AG04449 (cell line): ENCODE measurements at regions of chr12 and their contacts with region 1.

Region 1: DNA sequence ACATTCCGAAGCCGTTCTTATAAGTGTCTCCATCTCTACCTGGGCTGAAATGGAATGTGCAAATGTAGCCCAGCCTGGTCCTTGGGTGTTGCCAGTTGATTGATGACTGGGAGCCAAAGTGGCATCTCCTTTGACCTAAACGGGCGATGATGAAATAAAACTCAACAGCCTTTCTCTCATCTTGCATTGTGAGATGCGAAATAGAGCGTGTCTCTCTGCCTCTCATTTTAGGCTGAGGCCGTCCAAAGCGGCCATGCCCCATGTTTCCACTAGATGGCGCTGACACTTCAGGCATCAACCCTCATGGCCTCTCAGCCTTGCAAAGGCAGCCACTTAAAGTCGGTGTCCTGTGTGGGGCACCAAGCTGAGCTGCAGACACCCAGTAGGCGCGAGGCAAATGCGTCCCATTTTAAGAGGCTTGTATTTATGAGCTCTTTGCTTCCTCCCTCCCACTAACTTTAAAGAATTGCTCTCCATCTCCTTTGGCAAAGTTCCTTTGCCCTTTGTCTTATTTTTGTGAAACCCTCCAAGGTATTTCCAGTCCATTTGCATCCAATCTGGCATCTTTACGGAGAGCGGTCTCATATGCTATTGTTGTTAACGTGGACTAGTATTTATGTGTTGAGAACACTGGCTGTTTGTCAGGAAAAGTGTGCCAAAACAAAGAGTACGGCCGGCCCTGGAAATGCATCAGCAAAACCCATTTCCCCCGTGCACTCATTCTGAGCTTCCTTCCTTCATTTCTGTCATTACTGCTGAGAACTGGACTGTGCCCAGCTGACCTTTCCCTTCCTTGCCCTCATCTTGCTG is 25.0 kb downstream of the GPRC5A start:
- DNase-seq: no peak
- H3K4me3 ChIP-seq: no peak overlapping the region
- CTCF ChIP-seq: peak; percentile 97

Region 2: DNA sequence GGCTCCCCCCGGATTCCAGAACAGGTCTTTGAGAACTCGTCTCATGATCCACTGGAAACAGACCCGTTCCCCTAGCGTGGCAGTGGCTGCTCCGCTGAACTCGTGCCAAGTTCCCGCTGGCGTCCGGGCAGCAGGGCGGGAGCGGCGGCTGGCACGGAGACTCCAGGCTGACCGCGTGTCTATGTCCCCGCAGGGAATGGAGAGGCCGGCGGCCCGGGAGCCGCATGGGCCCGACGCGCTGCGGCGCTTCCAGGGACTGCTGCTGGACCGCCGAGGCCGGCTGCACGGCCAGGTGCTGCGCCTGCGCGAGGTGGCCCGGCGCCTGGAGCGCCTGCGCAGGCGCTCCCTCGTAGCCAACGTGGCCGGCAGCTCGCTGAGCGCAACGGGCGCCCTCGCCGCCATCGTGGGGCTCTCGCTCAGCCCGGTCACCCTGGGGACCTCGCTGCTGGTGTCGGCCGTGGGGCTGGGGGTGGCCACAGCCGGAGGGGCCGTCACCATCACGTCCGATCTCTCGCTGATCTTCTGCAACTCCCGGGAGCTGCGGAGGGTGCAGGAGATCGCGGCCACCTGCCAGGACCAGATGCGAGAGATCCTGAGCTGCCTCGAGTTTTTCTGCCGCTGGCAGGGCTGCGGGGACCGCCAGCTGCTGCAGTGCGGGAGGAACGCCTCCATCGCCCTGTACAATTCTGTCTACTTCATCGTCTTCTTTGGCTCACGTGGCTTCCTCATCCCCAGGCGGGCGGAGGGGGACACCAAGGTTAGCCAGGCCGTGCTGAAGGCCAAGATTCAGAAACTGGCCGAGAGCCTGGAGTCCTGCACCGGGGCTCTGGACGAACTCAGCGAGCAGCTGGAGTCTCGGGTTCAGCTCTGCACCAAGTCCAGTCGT is 129.4 kb before region 1 on chr12:
- CTCF ChIA-PET with region 1: interaction called, 47 read pairs
- POLR2A ChIA-PET with region 1: no interaction called
- DNase-seq: no peak
- H3K4me3 ChIP-seq: peak overlapping the region; percentile 65
- CTCF ChIP-seq: peak; percentile 5

Region 3: DNA sequence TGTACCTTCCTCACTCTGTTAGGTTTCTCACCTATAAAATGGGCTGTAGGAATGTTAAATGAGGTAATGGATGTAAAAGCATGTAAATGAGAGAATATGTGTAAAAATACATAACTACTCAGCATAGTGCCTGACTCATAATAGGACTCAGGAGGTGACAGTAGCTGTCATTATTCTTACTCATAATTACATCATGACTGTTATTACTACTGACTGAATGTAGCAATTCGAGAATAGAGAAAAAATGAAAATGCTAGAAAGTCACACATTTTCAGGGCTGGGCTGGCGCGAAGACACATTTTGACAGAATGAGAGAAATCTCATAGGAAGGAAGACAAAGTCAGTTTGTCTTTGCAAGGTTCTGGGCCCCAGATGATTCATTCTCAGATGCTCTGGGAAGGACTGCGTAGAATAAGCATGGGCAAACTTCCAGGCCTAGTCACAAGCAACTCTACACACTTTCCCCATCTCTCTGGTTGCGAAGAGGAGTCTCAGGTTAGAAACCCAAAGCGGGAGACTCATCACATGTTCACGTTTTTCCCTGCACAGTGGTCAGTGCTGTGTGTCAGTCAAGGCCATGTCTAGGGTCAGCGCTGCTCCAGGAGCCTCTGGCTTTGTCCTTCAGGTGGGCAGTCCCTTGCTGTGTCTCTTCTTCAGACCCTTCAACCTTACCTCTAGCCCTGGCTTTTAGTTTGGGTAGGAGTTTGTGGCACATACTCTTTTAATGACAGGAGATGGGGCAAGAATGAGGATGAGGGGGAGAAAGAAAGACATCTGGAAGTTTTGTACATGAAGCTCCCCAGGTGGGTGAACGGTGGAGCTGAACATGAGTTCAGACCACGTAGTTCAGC is 16.6 kb before region 1 on chr12:
- CTCF ChIA-PET with region 1: interaction called, 35 read pairs
- POLR2A ChIA-PET with region 1: no interaction called
- DNase-seq: peak; percentile 86
- H3K4me3 ChIP-seq: peak overlapping the region; percentile 23; the same call in 1 of the 2 replicates
- CTCF ChIP-seq: no peak

Region 4: DNA sequence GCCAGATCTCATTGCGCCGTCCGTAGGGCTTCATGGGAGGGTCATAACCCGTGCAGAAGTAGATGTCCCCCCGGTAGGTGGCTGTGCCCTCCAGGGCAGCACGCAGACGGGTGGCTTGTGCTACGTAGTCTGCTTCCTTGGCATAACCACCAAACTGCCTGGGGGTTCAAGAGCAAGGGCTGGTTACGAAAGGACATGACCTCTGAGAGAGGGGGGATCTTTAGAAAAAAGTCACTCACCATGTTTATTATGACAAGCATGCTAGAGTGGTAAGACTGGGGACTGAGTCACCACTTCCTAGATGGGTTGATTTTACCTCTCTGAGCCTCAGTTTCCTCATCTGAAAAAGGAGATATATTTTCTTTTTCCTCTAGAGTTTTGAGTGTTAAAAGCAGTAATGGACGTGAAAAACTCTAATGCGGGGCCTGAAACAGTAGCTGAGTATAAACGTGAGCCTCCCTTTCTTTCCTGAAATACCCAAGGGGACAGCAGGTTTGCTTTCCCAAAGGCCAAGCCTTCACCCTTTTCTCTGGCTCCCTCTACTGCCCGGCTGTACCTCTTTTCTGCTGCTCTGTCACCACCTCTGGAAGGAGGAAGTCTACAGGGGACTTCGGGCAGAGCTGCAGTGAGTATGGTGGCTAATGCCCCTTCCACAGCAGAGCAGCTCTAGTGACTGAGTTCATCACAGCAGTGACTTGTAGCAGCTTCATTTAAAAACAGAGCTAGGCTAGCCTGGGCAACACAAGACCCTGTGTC is 59.2 kb after region 1 on chr12:
- CTCF ChIA-PET with region 1: interaction called, 173 read pairs
- POLR2A ChIA-PET with region 1: no interaction called
- DNase-seq: no peak
- H3K4me3 ChIP-seq: no peak overlapping the region
- CTCF ChIP-seq: peak; percentile 52

Region 5: DNA sequence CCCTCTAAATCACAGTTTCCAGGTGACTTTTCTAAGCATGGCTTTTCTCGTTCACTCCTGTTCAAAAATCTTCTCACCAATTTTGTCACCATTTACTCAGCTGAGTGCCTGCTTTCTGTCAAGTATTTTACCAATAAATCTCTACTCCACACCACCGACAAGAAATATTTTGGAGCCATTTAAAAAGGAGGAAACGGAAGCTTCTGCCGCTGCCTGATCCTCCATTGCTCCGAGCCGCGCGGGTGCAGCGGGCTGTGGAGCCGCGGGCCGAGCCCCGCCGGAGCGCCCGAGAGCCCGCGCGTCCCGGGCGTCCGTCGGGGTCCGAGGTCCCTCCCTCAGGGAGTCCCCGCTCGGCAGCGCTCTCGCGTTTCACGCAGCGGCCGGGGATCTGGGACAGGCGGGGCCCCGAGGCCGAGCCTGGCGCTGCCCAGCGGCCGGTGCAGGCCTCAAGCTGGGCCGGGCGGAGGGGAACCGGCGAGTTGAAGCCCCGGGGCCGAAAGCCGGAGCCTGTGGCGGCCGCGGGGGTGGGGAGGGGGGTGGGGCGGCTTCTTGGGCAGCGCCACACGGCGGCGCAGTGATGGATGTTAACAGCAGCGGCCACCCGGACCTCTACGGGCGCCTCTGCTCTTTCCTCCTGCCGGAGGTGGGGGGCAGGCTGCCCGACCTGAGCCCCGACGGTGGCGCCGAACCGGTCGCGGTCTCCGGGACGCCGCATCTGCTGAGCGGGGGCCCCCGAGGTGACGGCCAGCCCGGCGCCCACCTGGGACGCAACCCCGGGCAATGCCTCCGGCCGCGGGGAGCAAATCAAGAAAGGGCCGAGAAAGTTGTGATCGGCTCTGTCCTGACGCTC is 84.8 kb after region 1 on chr12:
- CTCF ChIA-PET with region 1: interaction called, 13 read pairs
- POLR2A ChIA-PET with region 1: no interaction called
- DNase-seq: no peak
- H3K4me3 ChIP-seq: peak overlapping the region; percentile 64
- CTCF ChIP-seq: peak; percentile 35

Region 6: DNA sequence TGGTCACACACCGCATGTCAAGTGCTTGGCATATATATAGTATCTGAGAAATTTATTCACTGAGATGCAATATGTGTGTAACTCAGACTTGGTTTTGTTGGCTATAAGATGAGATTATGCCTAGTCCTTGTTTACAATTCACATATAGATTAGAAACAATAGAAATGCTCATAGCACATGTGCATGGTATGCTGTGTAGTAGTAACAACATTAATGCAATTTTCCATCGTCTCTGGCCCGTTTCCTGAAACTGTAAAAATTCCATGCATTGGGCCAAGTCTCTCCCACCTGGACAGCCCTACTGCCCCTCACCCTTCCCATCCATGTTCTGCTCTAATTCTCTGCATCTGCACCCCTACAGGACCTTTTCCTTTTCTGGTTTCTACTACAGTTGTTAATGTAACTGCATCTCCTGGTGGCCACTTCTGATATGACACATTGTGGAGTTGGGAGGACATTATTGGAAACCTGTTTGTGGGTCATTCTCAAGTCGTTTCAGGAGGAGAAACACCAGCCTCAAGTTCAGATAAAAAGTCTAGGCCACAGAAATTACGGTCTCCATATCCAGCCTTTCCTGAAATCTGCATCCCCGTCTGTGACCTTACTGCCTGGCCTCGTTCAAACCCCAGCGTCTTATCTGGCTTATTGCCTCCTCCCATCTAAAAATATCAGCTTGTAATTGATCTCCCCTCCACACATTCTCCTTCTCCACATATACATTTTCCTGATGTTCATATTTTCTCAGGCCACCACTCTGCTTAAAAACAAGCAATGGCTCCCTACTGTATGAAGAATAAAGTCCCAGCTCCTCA is 317.7 kb after region 1 on chr12:
- CTCF ChIA-PET with region 1: interaction called, 34 read pairs
- POLR2A ChIA-PET with region 1: no interaction called
- DNase-seq: no peak
- H3K4me3 ChIP-seq: no peak overlapping the region
- CTCF ChIP-seq: peak; percentile 80

Region 7: DNA sequence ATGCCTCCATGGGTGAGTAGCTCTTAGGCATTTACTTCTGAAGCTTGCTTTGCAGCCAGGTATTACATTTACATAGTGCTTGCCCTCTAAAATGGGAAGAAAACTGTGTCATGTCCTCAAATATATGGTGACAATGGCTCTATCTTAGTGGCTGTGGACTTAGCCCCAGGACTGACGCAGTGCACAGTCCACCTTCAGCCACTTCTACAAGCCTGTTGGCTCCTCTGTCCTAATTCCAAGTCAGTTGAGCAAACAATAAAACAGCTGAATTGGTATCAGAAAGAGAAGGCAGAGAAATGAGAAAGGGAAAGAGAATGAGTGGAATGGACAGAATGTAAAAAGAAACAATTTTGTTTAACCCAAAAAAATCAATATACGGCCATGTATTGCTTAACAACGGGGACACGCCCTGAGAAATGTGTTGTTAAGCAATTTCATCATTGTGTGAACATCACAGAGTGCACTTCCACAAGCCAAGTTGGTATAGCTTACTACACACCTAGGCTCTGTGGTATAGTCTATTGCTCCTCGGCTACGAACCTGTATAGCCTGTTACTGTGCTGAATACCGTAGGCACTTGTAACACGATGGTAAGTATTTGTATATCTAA is 971.5 kb after region 1 on chr12:
- CTCF ChIA-PET with region 1: no interaction called
- POLR2A ChIA-PET with region 1: no interaction called
- DNase-seq: no peak
- H3K4me3 ChIP-seq: no peak overlapping the region
- CTCF ChIP-seq: no peak